ENCODE measurements at regions of chr1 and their contacts with region 1.

Region 1: DNA sequence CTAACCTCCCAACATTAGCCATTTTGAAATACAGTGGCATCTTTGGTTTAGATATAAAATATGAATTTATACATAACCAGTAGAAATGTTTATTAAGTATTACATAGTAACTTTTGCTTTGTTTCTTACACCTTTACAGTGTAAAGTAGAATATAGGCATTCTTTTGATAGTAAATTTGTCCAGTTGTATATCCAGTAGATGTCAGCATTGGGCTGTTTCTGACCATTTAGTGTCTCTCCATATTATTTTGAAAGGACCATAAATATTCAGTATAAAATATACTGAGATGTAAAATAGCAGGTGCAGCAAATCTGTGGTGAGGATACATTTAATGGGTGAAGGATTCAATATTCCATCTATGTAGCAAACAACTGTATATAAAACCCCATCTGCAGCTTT is 115.8 kb upstream of the ZRANB2 start:
- DNase-seq: peak; percentile 25
- ATAC-seq: peak; percentile 64; the same call in 1 of the 2 replicates
- H3K4me3 ChIP-seq: no peak overlapping the region
- H3K27ac ChIP-seq: no peak overlapping the region
- H3K4me1 ChIP-seq: no peaks in the 10 kb centered on the region
- H3K27me3 ChIP-seq: no peaks in the 10 kb centered on the region
- CTCF ChIP-seq: peak; percentile 60
- POLR2A ChIP-seq: no peak
- RAD21 ChIP-seq: peak; percentile 74

Region 2: DNA sequence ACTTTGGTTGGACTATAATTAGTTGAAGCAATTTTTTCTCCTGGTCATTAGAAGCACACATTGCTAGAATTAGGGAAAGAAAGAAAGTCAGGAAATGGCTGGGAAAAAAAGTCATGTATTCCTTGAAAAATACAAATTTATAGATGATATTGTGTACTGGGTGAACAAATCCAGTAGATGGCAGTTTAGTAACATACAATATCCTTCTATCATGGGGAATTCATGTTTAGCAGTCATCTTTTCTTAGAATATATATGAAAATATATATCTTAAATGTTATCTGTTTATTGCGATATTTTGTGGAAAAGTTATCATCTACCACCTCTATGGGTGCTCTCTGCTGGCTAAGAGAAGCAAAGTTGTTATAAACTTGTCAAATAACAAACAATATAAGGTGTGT is 102.7 kb before region 1 on chr1:
- CTCF ChIA-PET with region 1: no interaction called
- POLR2A ChIA-PET with region 1: no interaction called
- dilution Hi-C with region 1: no loop called
- in situ Hi-C with region 1: no loop called
- intact Hi-C with region 1: loop called (anchors 5 kb)
- DNase-seq: peak; percentile 45
- ATAC-seq: peak; percentile 41
- H3K4me3 ChIP-seq: no peak overlapping the region
- H3K27ac ChIP-seq: no peak overlapping the region
- H3K4me1 ChIP-seq: peaks cover 4% of the 10 kb centered on the region
- H3K27me3 ChIP-seq: no peaks in the 10 kb centered on the region
- CTCF ChIP-seq: peak; percentile 74
- POLR2A ChIP-seq: no peak
- RAD21 ChIP-seq: peak; percentile 72

Region 3: GRCh38 chr1:71521655-71522264 is 325.1 kb after region 1 on chr1:
- CTCF ChIA-PET with region 1: no interaction called
- POLR2A ChIA-PET with region 1: no interaction called
- dilution Hi-C with region 1: no loop called
- in situ Hi-C with region 1: no loop called
- intact Hi-C with region 1: loop called (anchors 2 kb)
- DNase-seq: peak; percentile 43
- ATAC-seq: peak; percentile 78
- H3K4me3 ChIP-seq: no peak overlapping the region
- H3K27ac ChIP-seq: no peak overlapping the region
- H3K4me1 ChIP-seq: no peaks in the 10 kb centered on the region
- H3K27me3 ChIP-seq: no peaks in the 10 kb centered on the region
- CTCF ChIP-seq: peak; percentile 71
- POLR2A ChIP-seq: no peak
- RAD21 ChIP-seq: peak; percentile 73

Region 4: DNA sequence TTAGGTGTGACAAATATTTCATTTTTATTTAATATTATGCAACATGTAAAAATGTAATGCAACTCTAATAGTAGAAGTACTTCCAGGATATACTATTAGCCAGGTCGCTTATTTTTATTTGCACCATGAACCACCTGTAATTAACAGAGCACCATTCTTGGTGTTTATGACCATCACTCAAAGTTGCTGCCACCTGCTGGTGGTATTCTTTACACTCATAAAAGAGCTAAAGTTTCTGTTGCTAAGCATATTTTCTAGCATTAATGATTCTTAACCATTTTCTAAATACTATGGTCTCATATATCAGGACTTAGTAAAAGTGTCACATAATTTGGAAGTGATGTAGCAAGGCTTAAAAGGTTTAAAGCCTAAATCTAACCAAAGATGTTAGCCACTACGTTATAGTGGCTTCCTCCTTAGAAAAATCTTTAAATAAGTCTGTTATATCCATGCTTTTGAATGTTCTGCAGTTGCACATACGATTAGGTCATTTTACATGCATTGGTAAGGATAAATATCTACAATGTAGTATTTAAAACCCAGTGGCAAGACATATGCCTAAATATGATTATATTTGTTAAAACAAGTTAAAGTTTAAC is 841.2 kb after region 1 on chr1:
- CTCF ChIA-PET with region 1: interaction called, 3 read pairs
- POLR2A ChIA-PET with region 1: no interaction called
- dilution Hi-C with region 1: no loop called
- in situ Hi-C with region 1: no loop called
- intact Hi-C with region 1: loop called (anchors 1 kb)
- DNase-seq: peak; percentile 49
- ATAC-seq: peak; percentile 40; the same call in 1 of the 2 replicates
- H3K4me3 ChIP-seq: no peak overlapping the region
- H3K27ac ChIP-seq: no peak overlapping the region
- H3K4me1 ChIP-seq: no peaks in the 10 kb centered on the region
- H3K27me3 ChIP-seq: no peaks in the 10 kb centered on the region
- CTCF ChIP-seq: peak; percentile 59
- POLR2A ChIP-seq: no peak
- RAD21 ChIP-seq: peak; percentile 58

Region 5: DNA sequence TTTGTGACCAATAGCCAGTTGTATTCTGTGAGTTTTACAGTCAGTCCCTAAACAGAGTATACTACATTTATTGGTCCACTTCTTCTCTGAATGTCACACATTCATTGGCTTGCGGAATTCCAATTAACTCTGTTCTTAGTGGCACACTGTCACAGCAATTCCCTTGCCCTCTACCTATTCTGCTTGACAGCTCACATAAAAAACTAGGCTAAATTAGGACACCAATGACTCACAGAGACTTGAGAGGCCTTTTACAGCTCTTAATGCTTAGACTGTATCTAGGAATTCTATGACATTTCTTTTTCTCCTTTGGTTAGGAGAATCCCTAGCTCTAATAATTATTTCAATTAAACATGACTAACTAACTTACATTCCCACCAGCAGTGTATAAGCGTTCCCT is 981.6 kb after region 1 on chr1:
- CTCF ChIA-PET with region 1: no interaction called
- POLR2A ChIA-PET with region 1: no interaction called
- dilution Hi-C with region 1: no loop called
- in situ Hi-C with region 1: no loop called
- intact Hi-C with region 1: loop called (anchors 10 kb)
- DNase-seq: peak; percentile 38
- ATAC-seq: peak; percentile 48; the same call in 1 of the 2 replicates
- H3K4me3 ChIP-seq: no peak overlapping the region
- H3K27ac ChIP-seq: no peak overlapping the region
- H3K4me1 ChIP-seq: 0 out of 2 replicates have a peak, but pooled peaks cover 2% of the 10 kb centered on the region
- H3K27me3 ChIP-seq: no peaks in the 10 kb centered on the region
- CTCF ChIP-seq: no peak
- POLR2A ChIP-seq: no peak
- RAD21 ChIP-seq: no peak

Region 6: DNA sequence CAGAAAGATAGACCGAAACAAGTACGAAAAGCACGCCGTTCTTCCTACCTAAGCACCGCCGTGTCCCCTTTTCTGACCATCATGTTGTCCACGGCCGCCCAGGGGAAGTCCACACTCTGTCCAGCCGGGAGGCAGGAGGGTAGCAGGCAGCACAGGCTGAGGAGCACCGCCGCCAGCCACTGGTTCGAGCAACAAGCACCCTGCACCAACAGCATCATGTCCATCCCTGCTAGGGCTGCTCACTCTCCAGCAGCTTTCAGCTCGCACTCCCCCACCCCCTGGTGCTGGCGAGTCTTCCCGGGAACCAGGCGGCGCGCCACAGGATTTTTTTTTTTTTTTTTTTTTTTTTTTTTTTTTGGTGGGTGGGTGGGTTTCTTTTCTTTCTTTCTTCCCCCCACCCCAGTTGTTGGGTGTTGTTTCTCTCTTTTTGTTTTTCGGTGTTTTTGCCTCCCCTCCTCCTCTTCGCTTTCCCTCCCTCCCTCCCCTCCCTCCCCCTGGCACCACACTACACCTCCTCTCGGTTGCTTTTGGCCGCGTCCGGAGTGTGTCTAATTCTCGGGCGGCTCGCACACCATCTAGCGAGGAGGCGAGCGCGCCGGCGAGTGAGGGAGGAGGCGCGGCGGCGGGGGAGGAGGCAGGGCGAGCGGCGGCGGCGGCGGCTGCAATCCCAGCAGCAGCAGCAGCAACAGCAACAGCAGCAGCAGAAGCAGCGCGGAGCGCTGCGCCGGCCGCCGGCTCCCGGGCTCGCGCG is 1085.8 kb after region 1 on chr1 and contains the start of gene NEGR1:
- CTCF ChIA-PET with region 1: no interaction called
- POLR2A ChIA-PET with region 1: no interaction called
- dilution Hi-C with region 1: no loop called
- in situ Hi-C with region 1: no loop called
- intact Hi-C with region 1: loop called (anchors 5 kb)
- DNase-seq: peak; percentile 89
- ATAC-seq: peak; percentile 70
- H3K4me3 ChIP-seq: peak within 1 kb of the TSS; percentile 58
- H3K27ac ChIP-seq: peak within 1 kb of the TSS; percentile 87
- H3K4me1 ChIP-seq: peaks cover 2% of the 10 kb centered on the region; the same call in 1 of the 2 replicates
- H3K27me3 ChIP-seq: no peaks in the 10 kb centered on the region
- CTCF ChIP-seq: no peak; the same call in 1 of the 2 replicates
- POLR2A ChIP-seq: no peak
- RAD21 ChIP-seq: no peak; the same call in 1 of the 2 replicates
- total RNA-seq, gene NEGR1: 9.1 and 13.1 TPM in 2 replicates

Measured in IMR-90 (cell line).